ENCODE measurements at regions of chr6 and their contacts with region 1.

Region 1: GRCh38 chr6:118968416-118968815 is 33.5 kb upstream of the MCM9 start:
- DNase-seq: no peak
- H3K4me3 ChIP-seq: no peak overlapping the region
- CTCF ChIP-seq: no peak
- POLR2A ChIP-seq: no peak

Region 2: DNA sequence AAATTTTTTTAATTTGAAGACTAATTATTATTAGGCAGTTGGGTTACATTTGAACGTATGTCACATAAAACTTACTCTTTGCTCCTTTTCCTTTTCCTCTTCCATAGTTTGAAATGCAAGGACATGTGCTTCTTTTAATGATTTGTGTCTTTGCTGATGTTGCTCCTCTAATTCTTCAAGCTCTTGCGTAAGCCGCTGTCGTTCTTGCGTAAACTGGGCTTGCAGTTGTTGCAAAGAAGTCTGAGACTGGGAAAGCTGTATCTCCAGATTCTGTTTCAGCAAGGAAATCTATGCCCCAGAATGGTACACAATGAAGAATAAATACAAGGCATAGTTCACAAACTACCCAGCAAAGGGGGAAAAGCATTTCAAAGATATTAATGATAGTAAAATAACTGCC is 11.6 kb after region 1 on chr6:
- intact Hi-C with region 1: no loop called
- DNase-seq: peak in 1 of 2 donors; percentile 36
- H3K4me3 ChIP-seq: no peak overlapping the region
- CTCF ChIP-seq: no peak
- POLR2A ChIP-seq: no peak

Region 3: GRCh38 chr6:119024111-119024510 is 55.7 kb after region 1 on chr6:
- intact Hi-C with region 1: no loop called
- DNase-seq: no peak
- H3K4me3 ChIP-seq: no peak overlapping the region
- CTCF ChIP-seq: no peak
- POLR2A ChIP-seq: no peak

Region 4: DNA sequence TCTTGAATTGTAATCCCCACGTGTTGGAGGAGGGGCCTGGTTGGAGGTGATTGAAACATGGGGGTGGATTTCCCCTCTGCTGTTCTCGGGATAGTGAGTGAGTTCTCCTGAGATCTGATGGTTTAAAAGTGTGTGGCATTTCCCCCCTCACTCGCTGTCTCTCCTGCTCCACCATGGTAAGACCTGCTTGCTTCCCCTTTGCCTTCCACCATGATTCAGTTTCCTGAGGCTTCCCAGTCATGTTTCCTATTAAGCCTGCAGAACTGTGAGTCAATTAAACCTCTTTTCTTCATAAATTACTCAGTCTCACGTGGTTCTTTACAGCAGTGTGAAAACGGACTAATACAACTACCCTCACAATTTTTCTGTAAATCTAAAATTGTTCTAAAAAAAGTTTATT is 136.9 kb after region 1 on chr6:
- intact Hi-C with region 1: loop called (anchors 10 kb)
- DNase-seq: no peak
- H3K4me3 ChIP-seq: no peak overlapping the region
- CTCF ChIP-seq: no peak
- POLR2A ChIP-seq: no peak